Dorsolateral prefrontal cortex (tissue), 120 donors: ENCODE measurements at regions of chr2 and their contacts with region 1.

Region 1: DNA sequence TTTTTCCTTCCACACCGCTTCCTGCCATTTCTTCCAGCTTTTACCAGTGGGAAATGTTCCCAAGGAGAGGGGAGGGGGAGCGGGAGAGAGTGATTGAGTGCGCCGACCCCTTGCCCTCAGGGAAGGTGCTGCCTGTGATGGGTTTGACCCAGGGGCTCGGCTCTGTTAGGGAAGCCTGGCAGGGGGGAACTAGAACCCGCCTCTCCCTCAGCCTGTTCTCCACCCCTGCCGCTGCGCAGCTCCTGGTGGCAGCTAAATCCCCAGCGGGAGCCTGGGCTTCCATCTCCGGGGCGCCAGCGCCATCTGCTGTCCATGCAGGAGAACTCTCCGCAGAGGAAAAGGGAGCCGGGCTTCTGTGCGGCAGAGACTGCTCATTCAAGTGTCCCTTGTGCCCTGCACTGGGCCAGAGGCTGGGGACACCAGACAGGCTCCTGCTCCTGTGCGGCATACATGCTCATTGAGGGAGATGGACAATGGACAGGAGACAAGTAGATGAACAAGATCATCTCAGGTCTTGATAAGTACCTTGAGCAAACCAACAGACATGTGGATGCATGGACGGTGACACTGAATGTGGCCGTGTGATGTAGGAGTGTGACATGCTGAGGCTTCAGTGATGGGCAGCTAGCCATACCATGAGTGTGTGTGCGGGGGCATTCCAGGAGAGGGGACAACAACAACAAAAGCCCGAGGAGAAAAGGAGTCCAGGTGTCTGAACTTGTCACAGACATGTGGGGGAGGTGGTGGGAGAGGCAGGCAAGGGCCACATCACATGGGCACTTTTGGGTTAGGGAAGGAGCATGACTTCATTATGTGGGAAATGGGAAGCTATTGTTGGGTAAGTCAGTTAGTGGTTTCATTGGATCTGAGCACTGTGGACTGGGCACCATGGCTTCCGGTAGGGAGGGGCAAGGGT is 13.3 kb downstream of the CHPF start:
- DNase-seq: peak; percentile 64 to 92 (median 84)
- H3K4me3 ChIP-seq: peak overlapping the region in 53 of 59 donors; percentile 13 to 63 (median 41)
- H3K27ac ChIP-seq: peak overlapping the region in 10 of 59 donors; percentile 9 to 71 (median 52)
- H3K27me3 ChIP-seq: peaks cover 0 to 52% (median 6%) of the 10 kb centered on the region in 45 donors
- CTCF ChIP-seq: peak; percentile 89 to 100 (median 98)

Region 2: DNA sequence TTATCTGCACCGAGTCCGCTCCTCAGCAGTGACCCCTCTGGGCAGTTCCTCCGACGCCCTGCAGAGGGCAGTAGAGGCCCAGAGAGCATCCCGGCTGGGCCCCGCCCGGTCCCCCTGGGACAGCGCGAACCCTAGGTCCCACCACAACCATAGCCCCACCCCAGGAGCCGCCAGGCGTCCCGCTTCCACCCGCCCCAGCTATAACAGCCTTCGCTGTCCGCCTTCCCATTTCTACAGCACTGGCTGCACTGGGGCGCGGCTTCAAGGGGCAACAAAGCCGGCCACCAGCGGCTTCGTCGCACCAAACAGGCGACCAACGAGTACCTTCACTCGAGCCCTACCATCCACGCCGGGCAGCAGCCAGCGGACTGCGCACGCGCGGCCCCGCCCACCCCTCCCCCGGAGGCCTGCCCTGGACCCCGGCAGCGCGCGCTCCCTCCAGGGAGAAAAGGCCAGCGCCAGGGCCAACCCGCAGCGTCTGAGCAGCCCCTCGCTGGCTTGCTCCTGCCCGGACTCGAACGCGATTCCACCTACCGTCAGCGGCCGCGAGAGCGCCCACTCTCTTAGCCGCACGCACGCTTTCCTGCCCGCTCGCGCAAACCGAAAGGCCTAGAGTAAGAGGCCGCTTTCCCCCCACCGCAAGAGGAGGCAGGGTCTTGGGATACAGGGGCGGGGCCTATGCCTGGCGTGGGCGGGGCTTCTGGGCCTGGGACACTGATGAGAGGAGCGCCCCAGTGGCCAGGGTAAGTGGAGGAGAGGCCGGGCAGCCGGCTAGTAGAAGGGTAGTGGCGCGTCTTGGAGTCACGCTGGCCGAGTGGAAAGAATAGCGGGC is 369.9 kb before region 1 on chr2 and contains the start of gene NHEJ1:
- intact Hi-C with region 1: loop called in 1 of 2 experiments (anchors 10 kb)
- DNase-seq: peak; percentile 93 to 97 (median 96)
- H3K4me3 ChIP-seq: peak within 1 kb of the TSS; percentile 56 to 97 (median 75)
- H3K27ac ChIP-seq: peak within 1 kb of the TSS; percentile 86 to 99 (median 96)
- H3K27me3 ChIP-seq: no peaks in the 10 kb centered on the region
- CTCF ChIP-seq: peak; percentile 91 to 100 (median 99)
- total RNA-seq, gene NHEJ1: 5.8 to 16.8 (median 10.2) TPM

Region 3: DNA sequence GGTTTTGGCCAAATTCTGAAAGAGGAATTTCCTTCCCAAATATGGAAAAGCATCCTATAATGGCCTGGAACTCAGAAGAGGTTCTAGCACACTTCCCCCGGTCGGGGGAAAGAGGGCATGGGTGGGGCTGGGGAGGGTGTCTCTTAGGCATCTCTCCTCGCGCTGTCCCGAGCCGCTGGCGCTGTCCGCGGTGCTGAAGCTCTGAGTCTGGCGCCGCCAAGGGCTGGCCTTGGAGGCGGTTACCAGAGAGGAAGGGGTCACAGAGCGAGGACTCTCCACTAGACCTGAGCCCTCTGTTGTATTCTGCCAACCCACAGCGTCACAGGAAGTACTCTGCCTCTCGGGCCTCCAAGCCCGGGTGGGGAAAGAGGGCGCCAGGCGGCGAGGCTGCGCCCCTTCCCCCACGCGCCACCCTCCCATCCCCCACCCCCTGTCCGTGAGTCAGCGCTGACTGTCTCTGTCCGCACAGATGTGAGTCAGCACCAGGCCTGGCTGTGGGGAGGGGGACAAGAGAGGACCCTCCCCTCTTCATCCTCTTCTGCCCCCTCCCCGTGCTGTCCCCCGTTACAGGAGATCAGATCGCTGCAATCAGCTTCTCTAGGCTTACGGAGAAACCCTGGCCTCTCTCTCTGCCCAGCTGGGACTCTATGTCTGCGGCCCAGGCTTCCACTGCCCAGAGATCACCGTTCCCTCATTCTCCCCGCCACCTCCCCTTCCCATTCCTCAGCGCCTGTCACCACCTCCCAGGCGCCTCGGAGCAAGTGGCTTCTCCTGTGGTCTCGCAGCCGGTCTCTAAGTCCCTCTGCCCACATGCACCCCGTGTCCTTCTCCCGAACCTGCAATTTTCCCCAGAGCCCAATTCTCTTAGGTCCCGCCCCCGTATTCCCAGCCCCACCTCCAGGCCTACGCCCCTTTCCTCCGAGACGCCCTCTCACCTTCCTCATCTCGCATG is 221.9 kb before region 1 on chr2:
- intact Hi-C with region 1: loop called in 1 of 2 experiments (anchors 10 kb)
- DNase-seq: peak in 3 of 10 donors; percentile 51 to 69 (median 68)
- H3K4me3 ChIP-seq: peak overlapping the region in 58 of 59 donors; percentile 10 to 69 (median 51)
- H3K27ac ChIP-seq: peak overlapping the region in 49 of 59 donors; percentile 3 to 86 (median 69)
- H3K27me3 ChIP-seq: peaks cover 0 to 43% (median 14%) of the 10 kb centered on the region in 45 donors
- CTCF ChIP-seq: peak in 12 of 56 donors; percentile 5 to 35 (median 16)

Region 4: GRCh38 chr2:219402665-219403515 is 127.4 kb before region 1 on chr2:
- intact Hi-C with region 1: loop called (anchors 2 to 5 kb)
- DNase-seq: peak in 8 of 10 donors; percentile 48 to 82 (median 71)
- H3K4me3 ChIP-seq: peak overlapping the region in 1 of 59 donors; percentile 2
- H3K27ac ChIP-seq: peak overlapping the region in 1 of 59 donors; percentile 55
- H3K27me3 ChIP-seq: no peaks in the 10 kb centered on the region
- CTCF ChIP-seq: peak; percentile 62 to 92 (median 85)

Region 5: GRCh38 chr2:219475697-219476651 is 54.3 kb before region 1 on chr2:
- intact Hi-C with region 1: loop called in 1 of 2 experiments (anchors 2 kb)
- DNase-seq: peak in 8 of 10 donors; percentile 51 to 80 (median 64)
- H3K4me3 ChIP-seq: no peak overlapping the region
- H3K27ac ChIP-seq: no peak overlapping the region
- H3K27me3 ChIP-seq: no peaks in the 10 kb centered on the region
- CTCF ChIP-seq: peak; percentile 35 to 89 (median 80)

Region 6: DNA sequence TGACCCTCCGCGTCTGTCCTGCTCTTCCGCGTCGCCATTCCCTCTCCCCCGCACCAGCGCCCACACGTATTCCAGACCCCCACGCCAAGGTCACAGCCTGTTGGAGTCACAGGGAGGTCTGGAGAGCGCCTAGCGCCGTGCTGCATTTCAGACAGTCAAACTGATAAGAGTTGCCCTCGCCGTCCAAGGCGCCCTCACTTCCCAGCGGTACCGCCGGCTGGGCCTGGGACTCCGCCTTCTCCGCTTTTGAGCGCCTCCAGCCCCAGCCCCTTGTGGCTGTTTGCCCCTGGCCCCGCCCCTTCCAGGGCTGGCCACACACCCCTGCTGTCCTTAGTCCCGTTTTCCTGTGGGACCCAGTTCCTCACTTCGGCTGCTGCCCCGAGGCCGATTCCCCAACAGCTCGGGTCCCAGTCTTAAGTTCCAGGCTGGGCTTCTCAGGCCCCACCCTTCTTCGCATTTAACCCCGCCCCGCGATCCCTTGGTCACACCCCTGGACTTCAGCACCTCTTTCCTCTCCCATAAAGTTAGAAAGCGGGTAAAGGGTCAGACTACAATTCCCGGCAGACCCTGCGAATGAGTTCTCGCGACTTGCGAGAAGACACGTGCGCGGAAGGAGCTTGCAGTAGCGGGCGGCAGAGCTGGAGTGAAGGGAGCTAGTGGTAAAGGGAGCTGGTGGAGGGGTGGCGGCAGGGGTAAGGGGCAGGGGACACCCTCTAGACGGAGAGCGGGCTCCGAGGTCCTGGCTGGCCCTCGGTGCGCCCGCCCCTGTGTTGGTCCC is 31.8 kb before region 1 on chr2 and contains the start of gene GMPPA:
- intact Hi-C with region 1: loop called in 1 of 2 experiments (anchors 5 kb)
- DNase-seq: peak; percentile 79 to 98 (median 94)
- H3K4me3 ChIP-seq: peak within 1 kb of the TSS; percentile 64 to 100 (median 81)
- H3K27ac ChIP-seq: peak within 1 kb of the TSS in 58 of 59 donors; percentile 2 to 94 (median 78)
- H3K27me3 ChIP-seq: peaks cover 0 to 28% (median 13%) of the 10 kb centered on the region in 45 donors
- CTCF ChIP-seq: peak in 28 of 56 donors; percentile 9 to 58 (median 28)
- total RNA-seq, gene GMPPA: 13.8 to 39.8 (median 21.0) TPM

Region 7: GRCh38 chr2:219578790-219579616 is 48.7 kb after region 1 on chr2:
- intact Hi-C with region 1: no loop called
- DNase-seq: no peak
- H3K4me3 ChIP-seq: no peak overlapping the region
- H3K27ac ChIP-seq: no peak overlapping the region
- H3K27me3 ChIP-seq: peaks cover 0 to 7% (median 0%) of the 10 kb centered on the region in 45 donors
- CTCF ChIP-seq: no peak

Region 8: GRCh38 chr2:219901155-219901554 is 370.8 kb after region 1 on chr2:
- intact Hi-C with region 1: no loop called
- DNase-seq: no peak
- H3K4me3 ChIP-seq: no peak overlapping the region
- H3K27ac ChIP-seq: no peak overlapping the region
- H3K27me3 ChIP-seq: peaks cover 0 to 9% (median 0%) of the 10 kb centered on the region in 45 donors
- CTCF ChIP-seq: no peak